AG04450 (cell line): ENCODE measurements at regions of chr20 and their contacts with region 1.

Region 1: GRCh38 chr20:19974626-19975435 is 42.3 kb upstream of the NAA20 start:
- DNase-seq: peak; percentile 92
- H3K4me3 ChIP-seq: peak overlapping the region; percentile 99
- H3K27ac ChIP-seq: peak overlapping the region; percentile 100
- H3K27me3 ChIP-seq: no peaks in the 10 kb centered on the region
- CTCF ChIP-seq: no peak

Region 2: GRCh38 chr20:19552134-19552835 is 422.5 kb before region 1 on chr20:
- CTCF ChIA-PET with region 1: no interaction called
- POLR2A ChIA-PET with region 1: no interaction called
- DNase-seq: no peak
- H3K4me3 ChIP-seq: no peak overlapping the region
- H3K27ac ChIP-seq: no peak overlapping the region
- H3K27me3 ChIP-seq: no peaks in the 10 kb centered on the region
- CTCF ChIP-seq: no peak

Region 3: GRCh38 chr20:19815553-19815991 is 159.3 kb before region 1 on chr20:
- CTCF ChIA-PET with region 1: no interaction called
- POLR2A ChIA-PET with region 1: interaction called, 13 read pairs
- DNase-seq: peak; percentile 97
- H3K4me3 ChIP-seq: no peak overlapping the region
- H3K27ac ChIP-seq: peak overlapping the region; percentile 92
- H3K27me3 ChIP-seq: no peaks in the 10 kb centered on the region
- CTCF ChIP-seq: no peak

Region 4: DNA sequence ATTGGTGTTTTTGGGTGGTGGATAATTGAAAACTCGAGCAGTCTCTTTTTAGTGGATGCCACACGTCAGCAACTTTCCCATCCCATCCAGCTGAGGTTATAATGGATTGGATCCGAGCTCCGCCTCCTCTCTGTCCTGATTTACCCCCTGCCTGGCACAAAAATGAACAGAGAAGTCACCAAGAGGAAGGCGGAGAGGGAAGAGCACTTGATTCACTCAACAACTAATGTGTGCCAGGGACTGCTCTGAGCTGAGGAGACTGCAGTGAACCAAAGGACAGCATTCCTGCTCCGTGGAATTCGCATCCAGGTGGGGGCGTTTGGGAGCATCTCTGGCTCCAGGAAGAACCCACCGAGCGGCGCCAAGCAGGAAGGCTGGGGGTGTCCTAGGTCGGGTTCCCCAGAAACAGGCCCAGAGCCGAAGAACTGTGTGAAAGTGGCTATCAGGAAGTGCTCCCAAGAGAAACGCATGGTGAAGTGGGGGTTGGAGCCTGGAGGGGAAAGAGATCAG is 53.5 kb before region 1 on chr20:
- CTCF ChIA-PET with region 1: no interaction called
- POLR2A ChIA-PET with region 1: interaction called, 12 read pairs
- DNase-seq: no peak
- H3K4me3 ChIP-seq: no peak overlapping the region
- H3K27ac ChIP-seq: no peak overlapping the region
- H3K27me3 ChIP-seq: no peaks in the 10 kb centered on the region
- CTCF ChIP-seq: no peak

Region 5: DNA sequence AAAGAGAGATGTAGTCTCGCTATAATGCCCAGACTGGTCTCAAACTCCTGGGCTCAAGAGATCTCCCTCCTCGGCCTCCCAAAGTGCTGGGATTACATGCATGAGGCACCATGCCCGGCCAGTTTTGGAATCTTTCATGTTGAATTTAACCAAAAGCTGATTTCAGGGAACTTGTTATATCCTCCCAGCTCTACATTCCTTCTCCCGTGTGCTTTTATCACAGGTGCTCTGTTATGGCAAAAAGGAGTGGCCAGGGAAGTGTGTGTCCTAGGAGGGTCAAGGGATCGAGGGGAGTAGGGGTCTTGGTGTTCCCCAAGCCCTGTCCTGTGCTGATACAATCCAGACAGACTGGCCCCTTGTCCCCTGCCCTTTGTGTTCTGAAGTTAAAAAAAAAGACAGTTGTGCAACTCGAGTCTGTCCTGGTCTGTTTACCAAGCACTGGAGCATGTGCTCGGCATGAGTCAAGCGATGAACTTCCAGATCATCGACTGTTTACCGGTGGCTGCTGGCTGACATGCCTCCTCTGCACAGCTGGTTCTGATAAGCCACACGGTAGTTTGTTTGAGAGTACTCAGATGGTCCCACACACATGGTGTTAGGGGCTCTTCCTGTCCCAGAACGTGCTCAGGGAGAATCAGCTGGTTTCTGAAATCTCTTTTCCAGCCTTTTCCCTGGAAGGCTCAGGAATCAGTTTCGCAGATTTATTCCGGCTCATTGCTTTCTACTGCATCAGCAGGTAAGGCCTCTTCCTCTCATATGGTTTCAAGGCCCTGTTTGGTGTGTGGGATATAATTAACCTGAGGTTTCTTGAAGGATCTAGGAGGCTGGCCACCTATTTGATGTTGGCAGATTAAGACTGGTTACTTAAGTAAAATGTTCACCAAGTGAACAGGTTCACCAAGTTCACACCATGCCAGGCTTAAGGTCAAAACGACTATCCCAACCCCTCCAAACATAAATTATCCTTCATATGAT is 10.3 kb before region 1 on chr20:
- CTCF ChIA-PET with region 1: interaction called, 4 read pairs
- POLR2A ChIA-PET with region 1: interaction called, 41 read pairs
- DNase-seq: peak; percentile 94
- H3K4me3 ChIP-seq: no peak overlapping the region
- H3K27ac ChIP-seq: peak overlapping the region; percentile 94
- H3K27me3 ChIP-seq: no peaks in the 10 kb centered on the region
- CTCF ChIP-seq: no peak

Region 6: GRCh38 chr20:19995220-19995863 is 20.5 kb after region 1 on chr20:
- CTCF ChIA-PET with region 1: interaction called, 15 read pairs
- POLR2A ChIA-PET with region 1: interaction called, 88 read pairs
- DNase-seq: no peak
- H3K4me3 ChIP-seq: no peak overlapping the region
- H3K27ac ChIP-seq: no peak overlapping the region
- H3K27me3 ChIP-seq: no peaks in the 10 kb centered on the region
- CTCF ChIP-seq: peak; percentile 78

Region 7: GRCh38 chr20:20027284-20027683 is 52.5 kb after region 1 on chr20:
- CTCF ChIA-PET with region 1: no interaction called
- POLR2A ChIA-PET with region 1: no interaction called
- DNase-seq: no peak
- H3K4me3 ChIP-seq: no peak overlapping the region
- H3K27ac ChIP-seq: no peak overlapping the region
- H3K27me3 ChIP-seq: no peaks in the 10 kb centered on the region
- CTCF ChIP-seq: no peak

Region 8: DNA sequence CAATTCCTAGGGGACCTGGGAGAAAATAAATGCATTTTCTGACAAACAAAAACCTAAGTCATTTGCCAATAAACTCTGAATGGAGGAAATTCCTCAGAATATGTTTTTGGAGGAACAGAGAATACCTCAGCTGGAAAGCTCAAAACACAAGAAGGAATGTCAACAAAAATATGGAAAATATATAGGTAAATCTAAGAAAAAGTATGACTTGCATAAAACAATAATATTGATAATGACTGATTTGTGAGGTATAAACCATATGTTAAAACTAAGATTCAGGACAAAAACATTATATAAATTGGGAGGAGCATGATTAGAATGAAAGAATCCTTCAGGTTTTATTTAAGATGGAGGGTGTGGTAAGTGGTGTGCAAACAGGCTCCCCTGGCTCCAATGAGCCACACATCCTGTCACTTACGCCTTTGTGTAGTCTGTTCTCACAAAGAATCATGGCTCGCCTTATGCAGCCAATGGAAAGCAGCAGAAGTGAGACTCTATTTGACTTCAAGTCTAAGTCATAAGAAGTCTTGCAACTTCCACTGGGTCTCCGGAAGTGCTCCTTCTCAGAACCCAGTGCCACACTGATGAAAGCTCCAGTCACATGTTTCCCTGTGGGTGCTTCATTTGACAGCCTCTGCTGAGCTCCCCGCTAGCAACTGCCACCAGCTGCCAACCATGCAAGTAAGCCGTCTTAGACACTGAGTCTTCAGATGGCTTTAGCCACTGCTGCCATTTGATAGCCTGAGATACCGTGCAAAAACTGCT is 85.6 kb after region 1 on chr20:
- CTCF ChIA-PET with region 1: no interaction called
- POLR2A ChIA-PET with region 1: no interaction called
- DNase-seq: no peak
- H3K4me3 ChIP-seq: no peak overlapping the region
- H3K27ac ChIP-seq: no peak overlapping the region
- H3K27me3 ChIP-seq: peaks cover 16% of the 10 kb centered on the region
- CTCF ChIP-seq: no peak